ENCODE measurements at regions of chr7 and their contacts with region 1.

Region 1: DNA sequence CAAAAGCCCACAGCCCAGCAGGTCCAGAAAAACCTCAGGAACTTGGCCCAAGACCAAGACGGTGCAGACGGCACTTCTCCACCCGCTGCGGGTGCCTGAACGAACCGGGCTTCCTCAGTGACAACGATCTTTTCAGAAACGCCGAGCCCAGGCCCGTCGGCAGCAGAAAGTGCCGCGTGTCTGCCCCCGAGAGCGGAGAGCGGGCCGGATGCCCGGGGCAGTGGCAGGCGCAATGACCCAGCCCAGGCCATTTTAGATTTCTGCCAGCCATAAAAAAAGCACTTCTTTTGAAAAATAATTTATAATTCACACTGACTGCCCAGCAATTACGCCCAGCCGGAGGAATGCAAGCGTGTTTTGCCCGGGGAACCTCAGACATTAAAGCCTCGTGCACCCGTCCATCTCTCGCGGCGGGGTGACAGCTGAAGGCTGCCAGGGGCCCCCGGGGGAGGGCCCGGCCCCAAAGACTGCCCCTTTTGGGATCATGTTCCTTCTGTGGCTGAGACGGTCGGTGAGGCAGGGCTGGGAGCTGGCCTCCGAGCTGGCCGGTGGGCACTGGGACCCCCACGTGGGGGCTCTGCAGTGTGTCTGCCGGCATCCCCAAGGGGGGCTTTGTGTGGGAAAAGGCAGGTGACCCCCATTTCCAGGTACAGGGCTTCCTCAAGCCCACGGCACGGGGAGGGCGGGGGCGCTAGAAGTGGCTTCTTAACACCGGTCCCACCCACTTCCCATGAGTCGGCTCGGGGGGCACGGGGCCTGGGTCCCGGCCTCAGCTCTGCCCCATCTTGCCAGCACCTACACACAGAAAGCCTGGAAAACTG is 71.3 kb upstream of the PDGFA start:
- DNase-seq: no peak
- H3K4me3 ChIP-seq: peak overlapping the region; percentile 33
- H3K27ac ChIP-seq: peak overlapping the region; percentile 70 to 81
- H3K4me1 ChIP-seq: peaks cover 29 to 52% of the 10 kb centered on the region in 2 donors
- H3K27me3 ChIP-seq: no peaks in the 10 kb centered on the region
- CTCF ChIP-seq: no peak

Region 2: GRCh38 chr7:557558-557881 is 33.4 kb before region 1 on chr7:
- intact Hi-C with region 1: loop called (anchors 1 kb)
- DNase-seq: peak; percentile 46 to 89
- H3K4me3 ChIP-seq: no peak overlapping the region
- H3K27ac ChIP-seq: peak overlapping the region; percentile 84 to 91
- H3K4me1 ChIP-seq: peaks cover 8 to 15% of the 10 kb centered on the region in 2 donors
- H3K27me3 ChIP-seq: no peaks in the 10 kb centered on the region
- CTCF ChIP-seq: no peak

Region 3: GRCh38 chr7:568031-568951 is 22.6 kb before region 1 on chr7:
- intact Hi-C with region 1: loop called (anchors 2 kb)
- DNase-seq: peak in 1 of 2 donors; percentile 76
- H3K4me3 ChIP-seq: peak overlapping the region in 1 of 2 donors; percentile 39
- H3K27ac ChIP-seq: peak overlapping the region; percentile 59 to 68
- H3K4me1 ChIP-seq: peaks cover 12 to 20% of the 10 kb centered on the region in 2 donors
- H3K27me3 ChIP-seq: no peaks in the 10 kb centered on the region
- CTCF ChIP-seq: no peak